Transverse colon (tissue), 4 donors: ENCODE measurements at regions of chr17 and their contacts with region 1.

Region 1: GRCh38 chr17:65370669-65371131 is 190.7 kb downstream of the AXIN2 start:
- DNase-seq: peak; percentile 84
- H3K4me3 ChIP-seq: no peak overlapping the region
- H3K27ac ChIP-seq: peak overlapping the region; percentile 65 to 85 (median 80)
- H3K4me1 ChIP-seq: peaks cover 0 to 26% (median 19%) of the 10 kb centered on the region in 4 donors
- H3K27me3 ChIP-seq: no peaks in the 10 kb centered on the region
- CTCF ChIP-seq: peak in 1 of 5 experiments; percentile 30
- EP300 ChIP-seq: peak; percentile 47
- POLR2A ChIP-seq: peak; percentile 34

Region 2: DNA sequence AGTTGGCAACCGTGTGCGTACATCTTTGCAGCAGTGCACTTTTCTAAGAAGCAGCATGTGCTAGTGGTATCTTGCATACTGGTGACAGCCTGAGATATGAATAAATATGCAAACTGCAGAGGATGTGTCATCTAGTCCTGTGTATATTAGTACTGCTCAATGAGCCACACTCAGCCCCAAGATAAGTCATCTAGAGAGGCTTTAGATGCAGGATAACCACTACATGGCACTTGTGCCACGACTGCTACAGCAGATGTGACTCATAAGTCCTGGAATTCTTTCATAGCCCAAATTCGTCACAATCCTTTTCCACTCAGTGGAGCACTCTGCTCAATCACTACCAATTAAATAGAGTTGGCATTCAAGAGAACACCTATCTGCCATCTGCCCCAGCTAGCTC is 19.3 kb after region 1 on chr17:
- in situ Hi-C with region 1: no loop called
- intact Hi-C with region 1: loop called (anchors 2 kb)
- DNase-seq: no peak
- H3K4me3 ChIP-seq: no peak overlapping the region
- H3K27ac ChIP-seq: no peak overlapping the region
- H3K4me1 ChIP-seq: no peaks in the 10 kb centered on the region
- H3K27me3 ChIP-seq: no peaks in the 10 kb centered on the region
- CTCF ChIP-seq: no peak
- EP300 ChIP-seq: no peak
- POLR2A ChIP-seq: no peak

Region 3: GRCh38 chr17:65438708-65439294 is 68.1 kb after region 1 on chr17:
- in situ Hi-C with region 1: no loop called
- intact Hi-C with region 1: no loop called
- DNase-seq: no peak
- H3K4me3 ChIP-seq: no peak overlapping the region
- H3K27ac ChIP-seq: no peak overlapping the region
- H3K4me1 ChIP-seq: peaks cover 0 to 4% (median 0%) of the 10 kb centered on the region in 4 donors
- H3K27me3 ChIP-seq: peaks cover 3% of the 10 kb centered on the region
- CTCF ChIP-seq: no peak
- EP300 ChIP-seq: no peak
- POLR2A ChIP-seq: no peak